AG04450 (cell line): ENCODE measurements at regions of chr7 and their contacts with region 1.

Region 1: GRCh38 chr7:69502358-69502757 is 95.9 kb upstream of the AUTS2 start:
- DNase-seq: no peak
- H3K4me3 ChIP-seq: no peak overlapping the region
- H3K27ac ChIP-seq: no peak overlapping the region
- H3K27me3 ChIP-seq: no peaks in the 10 kb centered on the region
- CTCF ChIP-seq: no peak

Region 2: GRCh38 chr7:69489533-69489932 is 12.8 kb before region 1 on chr7:
- CTCF ChIA-PET with region 1: interaction called, 12 read pairs
- POLR2A ChIA-PET with region 1: no interaction called
- DNase-seq: no peak
- H3K4me3 ChIP-seq: no peak overlapping the region
- H3K27ac ChIP-seq: no peak overlapping the region
- H3K27me3 ChIP-seq: no peaks in the 10 kb centered on the region
- CTCF ChIP-seq: no peak

Region 3: GRCh38 chr7:69517985-69518704 is 15.8 kb after region 1 on chr7:
- CTCF ChIA-PET with region 1: no interaction called
- POLR2A ChIA-PET with region 1: no interaction called
- DNase-seq: no peak
- H3K4me3 ChIP-seq: no peak overlapping the region
- H3K27ac ChIP-seq: no peak overlapping the region
- H3K27me3 ChIP-seq: no peaks in the 10 kb centered on the region
- CTCF ChIP-seq: no peak